ENCODE measurements at regions of chr4 and their contacts with region 1.

Region 1: GRCh38 chr4:70704331-70705145 is 16.2 kb downstream of the UTP3 start:
- DNase-seq: peak; percentile 81
- ATAC-seq: peak; percentile 50
- H3K4me3 ChIP-seq: peak overlapping the region; percentile 83
- H3K27ac ChIP-seq: peak overlapping the region; percentile 78
- H3K4me1 ChIP-seq: peaks cover 26% of the 10 kb centered on the region
- H3K27me3 ChIP-seq: no peaks in the 10 kb centered on the region
- CTCF ChIP-seq: peak; percentile 52

Region 2: DNA sequence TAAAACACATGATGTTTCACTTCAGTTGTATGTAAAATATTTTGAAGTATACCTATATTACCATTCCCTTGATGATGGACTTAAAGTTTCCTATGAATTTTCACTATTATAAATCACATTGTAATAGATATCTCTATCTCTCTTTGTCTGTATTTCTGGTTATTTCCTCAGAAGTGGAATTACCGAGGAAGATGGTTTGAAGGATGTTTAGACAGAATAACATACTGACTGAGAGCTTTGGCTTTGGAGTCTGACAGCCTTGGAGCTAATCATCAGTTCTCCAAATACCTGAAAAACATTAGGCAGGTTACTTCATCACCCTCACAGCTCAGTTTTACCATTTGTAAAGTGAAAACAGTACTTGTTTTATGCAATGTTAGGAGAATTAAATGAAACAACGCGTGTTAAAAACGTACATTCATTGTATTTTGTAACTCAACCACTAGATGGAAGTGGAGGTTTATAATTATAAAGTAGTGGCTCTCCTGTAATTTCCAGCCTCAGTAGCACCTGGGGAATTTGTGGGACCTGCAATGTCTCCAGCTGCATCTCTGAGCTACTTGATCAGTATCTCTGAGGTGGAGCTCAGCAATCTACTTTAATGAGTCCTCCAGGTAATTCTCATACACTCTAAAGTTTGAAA is 52.6 kb before region 1 on chr4:
- CTCF ChIA-PET with region 1: interaction called, 3 read pairs
- POLR2A ChIA-PET with region 1: interaction called, 3 read pairs
- intact Hi-C with region 1: loop called (anchors 2 kb)
- DNase-seq: peak; percentile 77
- ATAC-seq: peak; percentile 74
- H3K4me3 ChIP-seq: peak overlapping the region; percentile 48; the same call in 1 of the 2 replicates
- H3K27ac ChIP-seq: no peak overlapping the region
- H3K4me1 ChIP-seq: no peaks in the 10 kb centered on the region
- H3K27me3 ChIP-seq: no peaks in the 10 kb centered on the region
- CTCF ChIP-seq: peak; percentile 85

Region 3: GRCh38 chr4:70801265-70801809 is 96.8 kb after region 1 on chr4:
- CTCF ChIA-PET with region 1: no interaction called
- POLR2A ChIA-PET with region 1: no interaction called
- intact Hi-C with region 1: no loop called
- DNase-seq: no peak
- ATAC-seq: no peak
- H3K4me3 ChIP-seq: no peak overlapping the region
- H3K27ac ChIP-seq: no peak overlapping the region
- H3K4me1 ChIP-seq: peaks cover 13% of the 10 kb centered on the region
- H3K27me3 ChIP-seq: no peaks in the 10 kb centered on the region
- CTCF ChIP-seq: no peak

Region 4: GRCh38 chr4:70901984-70902576 is 197.5 kb after region 1 on chr4 and contains the start of gene MOB1B:
- CTCF ChIA-PET with region 1: no interaction called
- POLR2A ChIA-PET with region 1: interaction called, 11 read pairs
- intact Hi-C with region 1: loop called (anchors 10 kb)
- DNase-seq: peak; percentile 87
- ATAC-seq: peak; percentile 89
- H3K4me3 ChIP-seq: peak within 1 kb of the TSS; percentile 87
- H3K27ac ChIP-seq: no peak within 1 kb of the TSS
- H3K4me1 ChIP-seq: peaks cover 11% of the 10 kb centered on the region
- H3K27me3 ChIP-seq: no peaks in the 10 kb centered on the region
- CTCF ChIP-seq: no peak
- total RNA-seq, gene MOB1B: 11.4 and 12.6 TPM in 2 replicates

Region 5: GRCh38 chr4:70925899-70926635 is 221.5 kb after region 1 on chr4:
- CTCF ChIA-PET with region 1: no interaction called
- POLR2A ChIA-PET with region 1: no interaction called
- intact Hi-C with region 1: loop called (anchors 5 kb)
- DNase-seq: no peak
- ATAC-seq: no peak
- H3K4me3 ChIP-seq: no peak overlapping the region
- H3K27ac ChIP-seq: no peak overlapping the region
- H3K4me1 ChIP-seq: peaks cover 10% of the 10 kb centered on the region
- H3K27me3 ChIP-seq: no peaks in the 10 kb centered on the region
- CTCF ChIP-seq: no peak

Region 6: DNA sequence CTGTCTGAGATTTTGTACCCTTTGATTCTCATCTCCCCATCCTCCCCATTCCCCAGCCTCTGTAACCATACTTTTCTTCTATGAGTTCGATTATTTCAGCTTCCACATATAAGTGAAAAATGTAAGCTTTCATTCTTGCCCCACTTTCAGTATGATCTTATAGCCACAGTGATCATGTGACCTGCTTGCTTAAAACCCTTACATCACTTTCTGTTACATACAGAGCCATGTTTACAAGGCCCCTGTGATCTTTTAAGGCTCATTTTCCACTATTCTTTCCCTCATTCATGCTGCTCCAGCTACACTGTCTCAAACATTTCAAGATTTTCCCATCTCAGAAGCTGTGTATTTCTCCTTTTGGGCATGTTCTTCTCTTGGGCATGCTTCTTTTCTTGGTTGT is 436.6 kb after region 1 on chr4:
- CTCF ChIA-PET with region 1: no interaction called
- POLR2A ChIA-PET with region 1: no interaction called
- intact Hi-C with region 1: no loop called
- DNase-seq: no peak
- ATAC-seq: no peak
- H3K4me3 ChIP-seq: no peak overlapping the region
- H3K27ac ChIP-seq: no peak overlapping the region
- H3K4me1 ChIP-seq: no peaks in the 10 kb centered on the region
- H3K27me3 ChIP-seq: no peaks in the 10 kb centered on the region
- CTCF ChIP-seq: no peak

Measured in PC-3 (cell line).